Right ventricle myocardium inferior (tissue), 1 donor: ENCODE measurements at regions of chr6 and their contacts with region 1.

Region 1: GRCh38 chr6:133055441-133055966 is 185.7 kb upstream of the EYA4 start:
- DNase-seq: no peak
- ATAC-seq: peak; percentile 47

Region 2: GRCh38 chr6:131851049-131851769 is 1204.3 kb before region 1 on chr6:
- intact Hi-C with region 1: no loop called
- DNase-seq: no peak
- ATAC-seq: peak; percentile 64

Region 3: GRCh38 chr6:132973514-132973993 is 82.0 kb before region 1 on chr6:
- intact Hi-C with region 1: loop called (anchors 5 kb)
- DNase-seq: no peak
- ATAC-seq: no peak

Region 4: GRCh38 chr6:133130863-133131262 is 75.4 kb after region 1 on chr6:
- intact Hi-C with region 1: loop called (anchors 5 kb)
- DNase-seq: peak; percentile 75
- ATAC-seq: peak; percentile 97